ENCODE measurements at regions of chr5 and their contacts with region 1.

Region 1: DNA sequence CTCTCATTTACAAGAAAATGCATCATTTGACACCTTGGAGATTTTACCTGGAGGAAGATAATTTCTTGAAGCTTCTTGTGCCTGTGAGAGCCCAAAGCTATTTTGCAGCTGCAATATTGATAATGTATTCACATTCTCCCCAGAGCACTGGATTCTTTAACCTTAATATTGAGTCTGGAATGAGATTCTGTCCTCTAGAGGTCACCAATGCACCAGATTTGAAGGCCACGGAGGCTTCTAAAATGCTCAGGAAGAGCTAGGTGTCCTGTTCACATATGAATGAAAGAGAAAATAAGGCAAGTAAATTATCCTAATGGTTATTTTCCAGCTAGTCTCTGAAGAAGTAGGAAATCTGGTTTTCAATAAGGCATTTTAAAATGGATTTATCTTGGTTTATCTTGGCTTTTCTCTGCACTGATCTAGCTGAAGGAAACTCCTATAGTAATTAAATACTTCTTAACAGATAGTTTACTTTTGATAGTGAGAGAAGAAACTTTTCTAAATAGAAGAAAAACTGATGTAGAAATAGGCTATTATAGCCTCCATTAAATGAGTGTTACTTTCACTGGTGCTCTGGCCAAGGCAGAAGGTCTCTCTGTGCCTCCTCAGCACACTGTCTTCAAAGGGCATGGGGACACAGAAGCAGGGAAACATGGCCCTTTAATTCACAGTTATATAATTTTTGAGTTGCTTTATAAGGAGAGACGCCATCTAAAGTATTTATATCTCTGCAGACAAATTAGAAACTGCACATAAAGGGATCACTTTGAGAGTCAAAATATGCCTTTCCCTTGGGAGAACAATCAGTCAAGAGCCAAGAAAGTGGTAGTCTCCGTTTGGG is 297.0 kb upstream of the ACTBL2 start:
- DNase-seq: peak; percentile 57
- H3K4me3 ChIP-seq: no peak overlapping the region
- H3K27ac ChIP-seq: no peak overlapping the region
- H3K4me1 ChIP-seq: no peaks in the 10 kb centered on the region
- H3K27me3 ChIP-seq: no peaks in the 10 kb centered on the region
- CTCF ChIP-seq: peak; percentile 26 to 48 (median 26)
- POLR2A ChIP-seq: no peak

Region 2: GRCh38 chr5:57298295-57298984 is 481.2 kb before region 1 on chr5:
- intact Hi-C with region 1: loop called (anchors 5 kb)
- DNase-seq: peak; percentile 93
- H3K4me3 ChIP-seq: peak overlapping the region; percentile 16 to 40
- H3K27ac ChIP-seq: no peak overlapping the region
- H3K4me1 ChIP-seq: no peaks in the 10 kb centered on the region
- H3K27me3 ChIP-seq: no peaks in the 10 kb centered on the region
- CTCF ChIP-seq: peak; percentile 76 to 91 (median 83)
- POLR2A ChIP-seq: no peak

Region 3: DNA sequence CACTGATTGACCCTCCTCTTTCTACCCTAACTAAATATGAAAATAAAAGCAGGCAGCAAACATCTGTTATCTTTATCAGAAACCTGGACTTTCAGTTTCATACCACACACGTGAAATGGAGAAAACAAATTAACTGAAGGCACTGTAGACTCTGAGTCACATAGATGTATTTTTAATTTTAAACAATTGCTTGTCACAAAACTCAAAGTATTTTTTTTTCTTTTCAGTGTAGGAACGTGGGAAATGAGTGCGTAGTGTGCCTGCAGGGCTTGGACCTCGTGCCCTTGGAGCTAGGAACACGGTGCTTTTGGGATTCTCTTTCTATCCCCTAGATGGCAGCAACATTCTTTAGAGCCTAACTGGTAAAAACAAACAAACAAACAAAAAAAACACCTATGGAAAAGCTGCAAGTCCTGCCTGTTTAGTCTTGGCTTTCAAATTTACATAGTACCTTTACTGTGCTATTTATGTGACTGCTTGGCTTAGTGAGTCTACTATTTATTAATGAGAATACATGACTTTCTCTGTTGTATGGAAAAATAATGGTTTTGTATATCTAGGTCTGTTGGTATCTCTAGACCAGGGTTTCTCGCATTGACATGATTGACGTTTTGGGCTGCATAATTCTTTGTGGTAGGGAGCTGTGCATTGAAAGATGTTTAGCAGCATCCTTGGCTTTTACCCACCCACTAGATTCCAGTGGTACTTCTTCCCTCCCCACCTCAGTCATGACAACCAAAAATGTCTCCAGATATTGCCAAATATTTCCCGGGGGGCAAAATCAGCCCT is 280.1 kb before region 1 on chr5:
- intact Hi-C with region 1: loop called (anchors 10 kb)
- DNase-seq: peak; percentile 41
- H3K4me3 ChIP-seq: no peak overlapping the region
- H3K27ac ChIP-seq: no peak overlapping the region
- H3K4me1 ChIP-seq: no peaks in the 10 kb centered on the region
- H3K27me3 ChIP-seq: no peaks in the 10 kb centered on the region
- CTCF ChIP-seq: peak in 2 of 3 experiments; percentile 51 to 52
- POLR2A ChIP-seq: no peak

Region 4: GRCh38 chr5:57613726-57614125 is 165.9 kb before region 1 on chr5:
- intact Hi-C with region 1: no loop called
- DNase-seq: no peak
- H3K4me3 ChIP-seq: no peak overlapping the region
- H3K27ac ChIP-seq: no peak overlapping the region
- H3K4me1 ChIP-seq: no peaks in the 10 kb centered on the region
- H3K27me3 ChIP-seq: no peaks in the 10 kb centered on the region
- CTCF ChIP-seq: no peak
- POLR2A ChIP-seq: no peak

Region 5: GRCh38 chr5:57718155-57718554 is 61.4 kb before region 1 on chr5:
- intact Hi-C with region 1: no loop called
- DNase-seq: no peak
- H3K4me3 ChIP-seq: no peak overlapping the region
- H3K27ac ChIP-seq: no peak overlapping the region
- H3K4me1 ChIP-seq: no peaks in the 10 kb centered on the region
- H3K27me3 ChIP-seq: no peaks in the 10 kb centered on the region
- CTCF ChIP-seq: no peak
- POLR2A ChIP-seq: no peak